H1 (cell line): ENCODE measurements at regions of chr1 and their contacts with region 1.

Region 1: DNA sequence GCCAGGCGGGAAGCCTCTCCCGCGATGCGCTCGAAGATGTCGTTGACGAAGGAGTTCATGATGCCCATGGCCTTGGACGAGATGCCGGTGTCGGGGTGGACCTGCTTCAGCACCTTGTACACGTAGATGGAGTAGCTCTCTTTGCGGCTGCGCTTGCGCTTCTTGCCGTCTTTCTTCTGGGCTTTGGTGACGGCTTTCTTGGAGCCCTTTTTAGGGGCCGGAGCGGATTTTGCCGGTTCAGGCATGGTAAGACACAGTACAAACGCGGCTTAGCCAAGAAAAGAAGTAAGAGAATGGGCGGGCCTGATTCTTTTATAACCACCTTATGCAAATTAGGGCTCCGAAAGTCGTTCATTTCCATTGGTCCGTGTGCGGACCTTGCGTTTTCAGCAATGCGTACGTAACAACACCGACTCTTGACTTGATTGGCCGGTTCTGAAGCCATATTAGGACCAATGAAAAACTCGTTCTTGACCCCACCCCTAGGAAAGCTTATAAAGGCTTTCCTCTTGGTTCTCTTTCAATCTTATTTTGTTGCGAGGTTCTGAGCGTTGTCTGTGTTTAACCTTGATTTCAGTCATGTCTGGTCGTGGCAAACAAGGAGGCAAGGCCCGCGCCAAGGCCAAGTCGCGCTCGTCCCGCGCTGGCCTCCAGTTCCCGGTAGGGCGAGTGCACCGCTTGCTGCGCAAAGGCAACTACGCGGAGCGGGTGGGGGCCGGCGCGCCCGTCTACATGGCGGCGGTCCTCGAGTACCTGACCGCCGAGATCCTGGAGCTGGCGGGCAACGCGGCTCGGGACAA is 12.8 kb upstream of the BOLA1 start:
- DNase-seq: peak; percentile 87 to 92
- H3K4me3 ChIP-seq: peak overlapping the region; percentile 70 to 92 (median 82)
- H3K27ac ChIP-seq: peak overlapping the region; percentile 98
- H3K4me1 ChIP-seq: peaks cover 0 to 5% (median 0%) of the 10 kb centered on the region in 4 experiments; a peak in 4 of 7 replicates
- H3K27me3 ChIP-seq: no peaks in the 10 kb centered on the region
- CTCF ChIP-seq: no peak
- EP300 ChIP-seq: peak in 1 of 2 experiments; percentile 14; a peak in 1 of 3 replicates
- POLR2A ChIP-seq: peak; percentile 93 to 95
- RAD21 ChIP-seq: no peak

Region 2: GRCh38 chr1:149899460-149900293 is 13.1 kb after region 1 on chr1 and contains the start of gene BOLA1:
- CTCF ChIA-PET with region 1: interaction called, 4 read pairs
- POLR2A ChIA-PET with region 1: interaction called, 91 read pairs
- DNase-seq: peak; percentile 87 to 92
- H3K4me3 ChIP-seq: peak within 1 kb of the TSS; percentile 59 to 75 (median 64)
- H3K27ac ChIP-seq: peak within 1 kb of the TSS; percentile 70
- H3K4me1 ChIP-seq: peaks cover 0 to 7% (median 4%) of the 10 kb centered on the region in 4 experiments; a peak in 5 of 7 replicates
- H3K27me3 ChIP-seq: no peaks in the 10 kb centered on the region
- CTCF ChIP-seq: no peak
- EP300 ChIP-seq: no peak
- POLR2A ChIP-seq: peak in 1 of 2 experiments; percentile 80; a peak in 2 of 3 replicates
- RAD21 ChIP-seq: 0 out of 4 replicates have a peak, but pooled peaks of 1 of the 2 experiments have one; percentile 2
- total RNA-seq, gene BOLA1: 8.1 and 13.1 TPM in 2 replicates

Region 3: DNA sequence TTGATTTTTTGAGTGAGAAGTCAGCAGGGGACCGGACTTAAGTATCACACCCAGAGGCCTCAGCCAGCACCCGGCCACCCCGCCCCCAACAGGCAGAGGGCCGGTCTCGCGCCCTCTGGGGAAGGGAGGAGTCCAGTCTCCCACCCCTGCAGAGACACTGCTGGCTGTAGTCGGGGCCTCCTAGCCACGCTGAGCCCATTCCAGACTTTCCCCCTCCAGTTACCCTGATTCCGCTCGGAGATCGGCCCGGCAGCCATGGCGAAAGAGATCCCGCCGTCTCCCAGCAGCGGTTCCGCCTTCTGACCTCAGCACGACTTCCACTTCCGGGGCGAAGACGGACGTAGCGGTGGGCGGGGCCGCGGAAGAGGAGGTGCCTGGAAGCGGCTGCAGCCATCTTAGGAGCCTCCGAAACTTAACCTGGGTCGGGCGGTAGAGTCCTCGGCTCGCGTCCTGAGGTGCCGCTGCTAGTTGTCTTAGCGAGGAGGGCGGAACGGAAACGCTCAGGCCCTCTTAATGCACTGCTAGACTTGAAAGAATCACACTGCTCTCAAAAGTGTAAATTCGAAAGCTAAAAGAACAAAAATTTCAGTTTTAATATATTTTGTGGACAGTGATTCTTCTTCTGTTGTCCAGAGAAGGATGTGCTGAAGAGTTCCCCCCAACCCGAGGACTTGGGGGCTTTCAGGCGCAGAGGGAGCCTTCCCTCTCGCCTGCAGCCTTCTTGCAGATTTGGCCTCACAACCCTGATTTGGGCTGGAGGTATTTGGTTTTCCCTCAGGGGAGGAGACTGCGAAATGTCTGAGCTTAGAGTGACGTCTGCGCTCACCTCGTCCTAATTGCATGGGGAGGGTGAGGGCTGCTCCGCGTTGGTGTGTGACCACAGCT is 41.1 kb after region 1 on chr1 and contains the start of gene SF3B4:
- CTCF ChIA-PET with region 1: interaction called, 3 read pairs
- POLR2A ChIA-PET with region 1: interaction called, 57 read pairs
- DNase-seq: peak in 1 of 2 experiments; percentile 92
- H3K4me3 ChIP-seq: peak within 1 kb of the TSS; percentile 85 to 95 (median 94)
- H3K27ac ChIP-seq: peak within 1 kb of the TSS; percentile 90
- H3K4me1 ChIP-seq: peaks cover 0 to 8% (median 4%) of the 10 kb centered on the region in 4 experiments; a peak in 4 of 7 replicates
- H3K27me3 ChIP-seq: no peaks in the 10 kb centered on the region
- CTCF ChIP-seq: no peak
- EP300 ChIP-seq: no peak
- POLR2A ChIP-seq: peak; percentile 92 to 93
- RAD21 ChIP-seq: 0 out of 4 replicates have a peak, but pooled peaks of 1 of the 2 experiments have one; percentile 5
- total RNA-seq, gene SF3B4: 119 and 122 TPM in 2 replicates

Region 4: DNA sequence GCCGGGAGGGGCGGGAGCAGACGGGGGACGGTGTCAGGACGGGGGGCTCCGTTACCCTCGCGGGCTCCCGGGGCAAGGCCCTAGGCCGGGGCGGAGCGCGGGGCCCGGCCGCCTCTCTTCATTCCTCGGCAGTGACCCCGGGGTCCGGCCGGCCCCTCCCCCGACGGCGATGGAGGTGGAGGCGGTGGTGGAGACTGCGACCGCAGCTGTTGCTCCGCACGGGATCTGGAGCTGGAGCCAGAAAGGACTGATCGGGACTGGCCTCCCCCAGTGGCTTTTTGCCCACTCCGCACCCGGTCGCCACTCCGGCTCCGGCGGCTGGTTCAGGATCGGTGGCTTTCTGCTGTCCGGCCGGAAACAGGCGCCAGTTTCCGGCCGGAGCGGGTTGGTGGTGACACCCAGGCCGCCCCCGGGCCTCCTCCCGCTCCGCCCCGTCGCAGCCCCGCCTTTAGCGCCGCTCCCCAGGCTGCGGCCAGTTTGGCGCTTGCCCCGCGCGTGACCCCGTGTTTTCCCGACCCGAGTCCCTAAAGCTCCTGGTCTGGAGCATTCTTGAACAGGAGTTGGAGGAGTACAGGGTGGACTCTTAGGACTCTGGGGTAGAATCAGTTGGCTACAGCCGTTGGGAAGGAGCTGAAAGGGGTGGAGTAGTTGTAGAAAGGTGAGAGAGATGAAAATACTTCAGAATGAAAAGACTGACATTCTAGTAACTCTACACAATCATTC is 124.0 kb after region 1 on chr1 and contains the start of gene OTUD7B:
- CTCF ChIA-PET with region 1: interaction called, 4 read pairs
- POLR2A ChIA-PET with region 1: interaction called, 41 read pairs
- DNase-seq: peak; percentile 54 to 88
- H3K4me3 ChIP-seq: peak within 1 kb of the TSS; percentile 93 to 98 (median 94)
- H3K27ac ChIP-seq: peak within 1 kb of the TSS; percentile 65
- H3K4me1 ChIP-seq: peaks cover 0 to 8% (median under 1%) of the 10 kb centered on the region in 4 experiments; a peak in 2 of 7 replicates
- H3K27me3 ChIP-seq: no peaks in the 10 kb centered on the region
- CTCF ChIP-seq: peak in 1 of 3 experiments; percentile 34; a peak in 2 of 4 replicates
- EP300 ChIP-seq: peak in 1 of 2 experiments; percentile 92; a peak in 1 of 3 replicates
- POLR2A ChIP-seq: peak in 1 of 2 experiments; percentile 89; a peak in 2 of 3 replicates
- RAD21 ChIP-seq: no peak; a peak in 1 of 4 replicates
- total RNA-seq, gene OTUD7B: 21.5 and 22.0 TPM in 2 replicates

Region 5: GRCh38 chr1:150149271-150150132 is 262.9 kb after region 1 on chr1 and contains the start of gene PLEKHO1:
- CTCF ChIA-PET with region 1: no interaction called
- POLR2A ChIA-PET with region 1: interaction called, 26 read pairs
- DNase-seq: peak in 1 of 2 experiments; percentile 68
- H3K4me3 ChIP-seq: peak within 1 kb of the TSS; percentile 73 to 99 (median 79)
- H3K27ac ChIP-seq: no peak within 1 kb of the TSS; the same call in 1 of the 2 replicates
- H3K4me1 ChIP-seq: peaks cover 0 to 14% (median 5%) of the 10 kb centered on the region in 4 experiments; a peak in 6 of 7 replicates
- H3K27me3 ChIP-seq: peaks cover 0 to 2% (median 0%) of the 10 kb centered on the region in 4 experiments; a peak in 1 of 7 replicates
- CTCF ChIP-seq: no peak
- EP300 ChIP-seq: peak in 1 of 2 experiments; percentile 1; a peak in 1 of 3 replicates
- POLR2A ChIP-seq: peak; percentile 29 to 61
- RAD21 ChIP-seq: no peak
- total RNA-seq, gene PLEKHO1: 35.0 and 37.0 TPM in 2 replicates